ENCODE measurements at regions of chr2 and their contacts with region 1.

Region 1: GRCh38 chr2:36663851-36664695 is 32.4 kb upstream of the VIT start:
- DNase-seq: peak; percentile 15
- ATAC-seq: peak; percentile 69
- H3K4me3 Mint-ChIP-seq: no peak overlapping the region
- H3K27ac Mint-ChIP-seq: no peak overlapping the region
- H3K4me1 Mint-ChIP-seq: no peaks in the 10 kb centered on the region
- H3K27me3 Mint-ChIP-seq: peaks cover 7% of the 10 kb centered on the region

Region 2: DNA sequence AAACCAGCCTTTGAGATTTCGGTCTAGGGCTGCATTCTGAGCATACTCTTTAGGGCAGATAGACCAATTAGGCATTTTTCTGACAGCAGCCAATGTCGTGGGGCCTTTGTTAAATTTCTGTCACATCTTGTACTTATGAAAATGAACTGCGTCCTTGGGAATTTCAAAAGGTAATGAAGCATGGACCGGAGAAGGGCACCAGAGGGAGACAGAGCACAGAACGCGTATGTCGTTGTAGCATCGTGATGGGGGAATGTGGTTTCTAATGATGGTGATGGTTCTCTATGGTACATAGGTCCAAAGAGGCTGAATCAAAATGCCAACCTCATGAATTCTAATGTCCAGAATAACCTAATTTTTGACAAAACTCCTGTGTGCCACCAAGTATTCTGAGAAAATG is 792.4 kb before region 1 on chr2:
- CTCF ChIA-PET with region 1: no interaction called
- POLR2A ChIA-PET with region 1: no interaction called
- intact Hi-C with region 1: loop called in 1 of 2 experiments (anchors 10 kb)
- DNase-seq: no peak
- ATAC-seq: no peak
- H3K4me3 Mint-ChIP-seq: no peak overlapping the region
- H3K27ac Mint-ChIP-seq: no peak overlapping the region
- H3K4me1 Mint-ChIP-seq: no peaks in the 10 kb centered on the region
- H3K27me3 Mint-ChIP-seq: peaks cover 9% of the 10 kb centered on the region

Region 3: DNA sequence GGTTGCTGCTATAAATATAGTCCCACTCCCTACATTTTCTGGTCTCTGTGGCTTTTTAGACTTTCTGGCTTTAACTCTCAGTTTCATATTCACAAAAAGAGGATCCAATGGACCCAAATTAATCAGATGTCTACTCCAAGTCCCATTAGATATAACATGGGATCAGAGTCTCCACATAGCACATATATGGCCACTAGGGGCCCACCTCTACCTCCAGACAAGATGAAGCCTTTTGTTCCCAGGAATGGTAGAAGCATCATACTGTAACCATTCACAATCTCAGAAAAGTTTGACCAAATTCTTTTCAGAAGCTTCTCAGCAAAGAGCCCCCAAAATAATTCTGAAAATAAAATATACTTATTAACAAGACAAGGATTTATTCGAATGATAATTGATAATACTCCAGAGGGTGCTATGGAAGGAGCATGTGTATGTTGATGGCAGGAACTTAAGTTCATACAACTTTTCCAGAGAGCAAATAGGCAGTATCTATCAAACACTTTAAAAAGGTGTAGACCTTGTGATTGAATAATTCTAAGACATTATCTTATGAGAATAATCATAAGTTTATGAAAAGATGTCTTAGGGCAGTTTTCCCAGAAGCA is 690.8 kb before region 1 on chr2:
- CTCF ChIA-PET with region 1: no interaction called
- POLR2A ChIA-PET with region 1: no interaction called
- intact Hi-C with region 1: loop called (anchors 10 kb)
- DNase-seq: peak; percentile 27
- ATAC-seq: peak; percentile 60
- H3K4me3 Mint-ChIP-seq: no peak overlapping the region
- H3K27ac Mint-ChIP-seq: no peak overlapping the region
- H3K4me1 Mint-ChIP-seq: peaks cover 2% of the 10 kb centered on the region
- H3K27me3 Mint-ChIP-seq: peaks cover 2% of the 10 kb centered on the region

Region 4: DNA sequence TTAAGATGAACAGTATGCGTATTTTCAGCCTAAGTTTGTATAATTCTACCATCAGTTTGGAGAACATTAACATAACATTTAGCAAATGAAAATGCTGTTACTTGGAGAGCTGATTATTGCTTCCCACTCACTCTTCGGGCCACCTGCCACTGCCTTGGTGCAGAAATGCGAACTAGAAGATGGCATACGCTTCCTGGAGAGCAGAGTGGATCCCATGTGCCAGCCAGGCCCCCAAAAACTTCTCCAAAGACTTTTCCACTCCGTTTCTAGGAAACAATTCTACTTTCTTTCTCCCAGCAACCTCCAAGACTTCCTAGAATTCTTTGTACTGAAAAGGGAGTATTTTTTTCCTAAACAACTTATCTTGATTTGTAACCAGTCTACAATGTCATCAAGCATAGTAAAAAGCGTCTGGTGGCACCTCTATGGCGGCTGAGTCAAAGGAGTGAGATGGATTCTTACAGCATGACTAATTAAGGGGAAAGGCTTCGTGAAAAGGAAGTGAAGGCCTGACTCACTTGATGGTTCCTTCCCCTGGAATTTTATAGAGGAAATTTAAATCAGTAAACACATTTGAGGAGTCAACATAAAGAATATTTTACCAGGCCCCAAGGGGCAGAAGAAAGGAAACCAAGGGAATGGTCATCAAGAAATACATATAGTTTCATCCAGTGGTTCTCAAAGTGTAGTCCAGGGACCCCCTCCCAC is 102.7 kb before region 1 on chr2:
- CTCF ChIA-PET with region 1: interaction called, 6 read pairs
- POLR2A ChIA-PET with region 1: interaction called, 10 read pairs
- intact Hi-C with region 1: no loop called
- DNase-seq: no peak
- ATAC-seq: no peak
- H3K4me3 Mint-ChIP-seq: no peak overlapping the region
- H3K27ac Mint-ChIP-seq: no peak overlapping the region
- H3K4me1 Mint-ChIP-seq: peaks cover 9% of the 10 kb centered on the region
- H3K27me3 Mint-ChIP-seq: no peaks in the 10 kb centered on the region

Region 5: GRCh38 chr2:36587101-36587500 is 77.0 kb before region 1 on chr2:
- CTCF ChIA-PET with region 1: no interaction called
- POLR2A ChIA-PET with region 1: no interaction called
- intact Hi-C with region 1: loop called in 1 of 2 experiments (anchors 2 kb)
- DNase-seq: no peak
- ATAC-seq: no peak
- H3K4me3 Mint-ChIP-seq: no peak overlapping the region
- H3K27ac Mint-ChIP-seq: no peak overlapping the region
- H3K4me1 Mint-ChIP-seq: peaks cover 5% of the 10 kb centered on the region
- H3K27me3 Mint-ChIP-seq: no peaks in the 10 kb centered on the region

Region 6: DNA sequence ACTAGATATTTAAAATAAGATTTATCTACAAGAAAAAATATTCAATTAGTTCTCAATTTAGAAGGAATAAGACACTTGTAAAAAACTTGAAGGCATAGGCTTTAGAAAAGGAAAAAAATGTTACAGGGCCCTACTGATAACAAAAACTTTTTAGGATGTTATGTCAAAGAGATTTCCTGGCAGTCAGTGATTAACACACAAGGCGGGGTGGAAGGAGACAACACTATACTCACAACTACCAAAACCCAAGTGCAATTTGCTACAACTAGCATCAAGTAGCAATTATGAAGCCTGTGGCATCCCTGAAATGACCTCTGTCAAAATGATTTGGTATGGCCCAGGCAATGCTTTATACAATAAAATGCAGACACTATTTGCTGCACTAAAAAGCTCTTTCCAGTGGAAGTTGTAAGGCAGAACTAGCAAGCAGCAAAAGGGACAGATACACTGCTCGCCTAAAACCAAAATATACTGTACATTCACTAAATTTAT is 287.0 kb after region 1 on chr2:
- CTCF ChIA-PET with region 1: no interaction called
- POLR2A ChIA-PET with region 1: no interaction called
- intact Hi-C with region 1: no loop called
- DNase-seq: no peak
- ATAC-seq: no peak
- H3K4me3 Mint-ChIP-seq: no peak overlapping the region
- H3K27ac Mint-ChIP-seq: no peak overlapping the region
- H3K4me1 Mint-ChIP-seq: peaks cover 33% of the 10 kb centered on the region
- H3K27me3 Mint-ChIP-seq: no peaks in the 10 kb centered on the region

Measured in activated CD4-positive, alpha-beta T cell treated with anti-CD3 and anti-CD28 coated beads for 36 hours (primary cell).